Left ventricle myocardium inferior (tissue), 1 donor: ENCODE measurements at regions of chr3 and their contacts with region 1.

Region 1: DNA sequence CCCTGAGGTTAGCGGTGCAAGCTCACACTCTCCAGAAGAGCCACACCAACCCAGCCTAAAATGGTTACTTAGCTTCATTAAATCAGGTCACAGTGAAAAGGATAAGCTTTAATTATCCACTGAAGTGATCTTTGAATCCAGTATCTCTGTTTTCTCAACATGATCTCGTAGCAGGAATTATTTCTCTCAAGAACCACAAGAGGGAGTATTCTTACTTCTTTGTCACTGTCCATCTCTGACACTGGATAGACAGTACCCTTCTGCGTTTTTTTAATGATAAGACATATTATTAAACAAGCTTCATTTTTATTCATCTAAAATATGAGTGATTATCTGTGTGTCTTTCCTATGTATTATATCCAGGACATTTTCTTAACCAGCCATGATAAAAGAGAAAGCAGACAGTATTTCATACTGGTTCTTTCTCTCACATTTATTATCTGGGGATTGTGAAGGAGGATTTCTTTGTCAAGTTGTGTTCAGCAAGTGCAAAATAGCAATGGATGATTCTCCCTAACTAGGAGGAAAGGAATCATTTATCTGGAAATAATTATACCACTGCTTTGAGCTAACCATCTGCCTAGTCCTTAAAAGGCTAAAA is 105.4 kb upstream of the CCDC54 start:
- DNase-seq: no peak
- H3K4me3 ChIP-seq: no peak overlapping the region
- H3K27ac ChIP-seq: no peak overlapping the region
- H3K4me1 ChIP-seq: no peaks in the 10 kb centered on the region
- H3K27me3 ChIP-seq: no peaks in the 10 kb centered on the region
- CTCF ChIP-seq: peak; percentile 80

Region 2: DNA sequence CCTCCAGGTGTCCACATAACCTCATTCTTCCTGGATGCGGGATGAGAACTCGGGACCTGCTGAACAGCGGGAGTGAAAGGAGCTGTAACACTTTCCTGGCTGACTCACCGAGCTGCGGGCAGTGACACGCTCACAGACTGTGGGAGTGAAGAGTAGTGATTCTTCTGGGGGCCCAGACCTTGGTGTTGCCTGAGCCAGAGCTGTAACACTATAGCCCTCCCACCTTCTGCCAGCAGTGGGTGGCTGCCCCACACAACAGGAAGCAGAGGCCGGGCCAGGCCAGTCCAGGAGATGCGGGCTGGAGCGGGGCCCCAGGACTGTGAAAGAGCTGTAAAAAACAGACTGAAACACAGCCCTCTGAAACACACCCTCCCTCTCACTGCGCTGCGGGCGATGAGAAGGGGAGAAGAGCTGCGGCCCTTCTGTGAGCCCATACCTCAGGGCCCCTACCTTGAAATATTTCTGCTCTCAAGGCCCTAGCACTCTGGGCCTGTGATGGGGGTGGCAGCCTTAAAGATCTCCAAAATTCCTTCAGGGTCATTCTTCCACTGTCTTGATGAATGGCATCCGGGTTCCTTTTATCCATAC is 358.7 kb before region 1 on chr3:
- intact Hi-C with region 1: no loop called
- DNase-seq: no peak
- H3K4me3 ChIP-seq: no peak overlapping the region
- H3K27ac ChIP-seq: no peak overlapping the region
- H3K4me1 ChIP-seq: no peaks in the 10 kb centered on the region
- H3K27me3 ChIP-seq: no peaks in the 10 kb centered on the region
- CTCF ChIP-seq: no peak

Region 3: DNA sequence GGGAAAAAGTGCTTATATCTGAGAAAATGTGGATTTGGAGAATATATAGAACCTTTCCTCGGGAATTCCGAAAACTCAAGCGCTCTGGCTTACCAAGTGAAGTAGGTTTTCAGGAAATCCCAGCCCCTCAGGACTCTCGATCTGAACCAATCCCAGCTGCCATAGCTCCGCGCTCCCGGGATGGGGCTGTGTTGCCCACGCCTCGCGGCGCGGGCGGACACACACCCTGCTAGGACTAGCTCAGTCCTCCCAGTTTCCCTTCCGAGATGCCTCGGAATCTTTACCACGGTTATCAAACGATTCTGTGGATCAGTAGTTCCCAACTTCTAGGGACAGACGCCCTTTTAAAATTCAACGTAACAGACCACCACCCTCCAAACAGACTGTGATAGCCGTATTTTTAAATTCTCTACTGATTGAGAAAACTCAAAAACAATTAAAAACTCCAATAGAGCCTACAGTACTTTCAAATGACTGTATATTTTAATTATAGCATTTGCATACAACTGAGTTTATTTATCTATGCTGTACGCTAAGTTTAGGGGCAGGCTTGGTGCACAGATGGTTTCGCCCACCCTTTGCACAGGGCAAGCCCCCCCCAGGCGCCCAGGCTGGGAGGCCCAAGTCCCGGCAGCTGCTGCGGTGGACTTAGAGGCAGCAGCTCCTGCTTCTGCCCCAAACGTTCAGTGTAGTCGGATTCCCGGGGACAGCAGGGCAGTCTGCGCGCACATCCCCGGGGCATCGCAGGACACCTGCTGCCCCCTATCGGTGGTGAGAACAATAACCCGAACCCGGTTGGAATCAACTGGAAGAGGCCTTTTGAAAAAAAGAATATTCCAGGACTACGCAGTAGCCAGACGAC is 157.7 kb after region 1 on chr3:
- intact Hi-C with region 1: loop called (anchors 10 kb)
- DNase-seq: peak; percentile 74
- H3K4me3 ChIP-seq: peak overlapping the region; percentile 80
- H3K27ac ChIP-seq: peak overlapping the region; percentile 96
- H3K4me1 ChIP-seq: peaks cover 25% of the 10 kb centered on the region
- H3K27me3 ChIP-seq: no peaks in the 10 kb centered on the region
- CTCF ChIP-seq: peak; percentile 93

Region 4: GRCh38 chr3:109178708-109179107 is 1906.8 kb after region 1 on chr3:
- intact Hi-C with region 1: no loop called
- DNase-seq: no peak
- H3K4me3 ChIP-seq: no peak overlapping the region
- H3K27ac ChIP-seq: no peak overlapping the region
- H3K4me1 ChIP-seq: no peaks in the 10 kb centered on the region
- H3K27me3 ChIP-seq: no peaks in the 10 kb centered on the region
- CTCF ChIP-seq: no peak